ENCODE measurements at regions of chr1 and their contacts with region 1.

Region 1: GRCh38 chr1:39901698-39902459 is at the start of gene MYCL:
- DNase-seq: peak; percentile 65 to 92
- H3K4me3 ChIP-seq: peak within 1 kb of the TSS; percentile 43
- CTCF ChIP-seq: peak in 1 of 3 donors; percentile 11
- POLR2A ChIP-seq: no peak
- total RNA-seq, gene MYCL: 66.9 to 178 (median 123) TPM

Region 2: DNA sequence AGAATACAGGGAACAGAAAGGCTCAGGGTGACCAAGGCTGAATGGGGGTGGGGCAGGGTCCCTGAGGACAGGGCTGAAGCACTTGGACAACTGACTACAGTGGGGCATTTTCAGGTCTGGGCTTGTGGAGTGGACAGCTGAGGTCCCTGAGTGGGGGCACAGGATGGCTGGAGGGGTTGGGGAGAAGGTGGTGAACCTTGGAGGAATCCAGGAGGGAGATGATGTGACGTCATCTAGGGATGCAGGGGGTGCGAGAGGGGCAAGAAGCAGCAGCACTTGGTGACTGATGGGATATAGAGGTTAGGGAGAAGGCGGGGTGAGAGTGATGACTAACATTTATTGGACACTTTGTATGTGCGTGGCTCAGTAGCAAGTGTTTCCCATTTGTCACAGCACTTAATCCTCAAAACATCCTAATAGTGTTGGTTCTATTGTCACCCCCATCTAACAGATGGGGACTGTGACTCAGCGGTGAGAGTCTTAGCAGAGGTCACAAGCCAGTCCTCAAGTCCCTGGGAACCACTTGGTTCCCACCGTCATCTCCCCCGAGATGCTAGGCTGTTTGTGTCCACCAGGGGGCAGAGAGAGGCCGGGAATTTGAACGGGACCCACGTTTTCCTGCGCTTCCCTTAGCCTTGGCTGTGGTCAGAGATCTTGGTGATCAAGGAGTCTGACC is 85.3 kb before region 1 on chr1:
- intact Hi-C with region 1: loop called (anchors 5 kb)
- DNase-seq: peak; percentile 62 to 92
- H3K4me3 ChIP-seq: no peak overlapping the region
- CTCF ChIP-seq: peak in 1 of 3 donors; percentile 85
- POLR2A ChIP-seq: no peak

Region 3: DNA sequence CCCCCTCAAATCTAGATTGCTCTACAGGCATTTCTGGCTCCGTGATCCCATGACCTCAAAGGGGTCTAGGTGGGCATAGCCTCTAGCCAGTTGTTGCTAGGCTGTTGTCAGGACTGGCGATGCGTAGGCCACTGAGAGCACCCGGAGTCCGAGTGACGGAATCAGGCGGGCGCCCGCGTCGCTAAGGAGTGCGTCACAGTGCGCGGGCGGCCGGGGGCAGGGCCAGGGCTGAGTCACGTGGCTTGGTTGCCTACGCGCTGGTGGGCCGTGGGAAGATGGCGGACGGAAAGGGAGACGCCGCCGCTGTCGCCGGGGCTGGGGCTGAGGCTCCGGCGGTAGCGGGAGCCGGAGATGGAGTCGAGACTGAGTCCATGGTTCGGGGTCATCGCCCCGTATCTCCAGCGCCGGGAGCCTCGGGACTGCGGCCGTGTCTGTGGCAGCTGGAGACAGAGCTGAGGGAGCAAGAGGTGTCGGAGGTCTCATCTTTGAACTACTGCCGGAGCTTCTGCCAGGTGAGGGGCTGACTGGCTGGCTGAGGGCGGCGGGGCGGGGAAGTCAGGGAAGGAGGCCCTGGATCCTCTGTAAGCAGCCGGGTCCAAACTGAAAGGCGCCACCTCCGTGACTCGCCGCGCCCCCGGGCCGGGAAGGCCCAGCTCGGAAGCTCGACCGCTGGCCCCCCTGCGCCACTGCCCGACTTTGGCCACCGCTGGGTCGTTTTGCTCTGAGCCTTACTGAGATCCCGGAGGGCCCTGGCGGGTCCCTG is 259.4 kb after region 1 on chr1 and contains the start of gene RLF:
- intact Hi-C with region 1: no loop called
- DNase-seq: peak; percentile 93 to 99
- H3K4me3 ChIP-seq: peak within 1 kb of the TSS; percentile 91
- CTCF ChIP-seq: no peak
- POLR2A ChIP-seq: peak in 1 of 2 donors; percentile 72
- total RNA-seq, gene RLF: 22.8 to 30.9 (median 25.3) TPM

Measured in lower leg skin (tissue), 4 donors.